ENCODE measurements at regions of chr7 and their contacts with region 1.

Region 1: GRCh38 chr7:108459931-108460551 is 3.8 kb upstream of the NRCAM start:
- DNase-seq: peak; percentile 49
- ATAC-seq: peak; percentile 39
- H3K4me3 ChIP-seq: no peak overlapping the region
- H3K4me3 Mint-ChIP-seq: no peak overlapping the region
- H3K27ac ChIP-seq: no peak overlapping the region
- H3K27ac Mint-ChIP-seq: no peak overlapping the region
- H3K4me1 ChIP-seq: peaks cover 12 to 15% of the 10 kb centered on the region in 2 donors
- H3K4me1 Mint-ChIP-seq: peaks cover 10% of the 10 kb centered on the region
- H3K27me3 ChIP-seq: peaks cover 0 to 53% (median 29%) of the 10 kb centered on the region in 4 experiments
- H3K27me3 Mint-ChIP-seq: peaks cover 55% of the 10 kb centered on the region
- CTCF ChIP-seq: peak; percentile 71

Region 2: DNA sequence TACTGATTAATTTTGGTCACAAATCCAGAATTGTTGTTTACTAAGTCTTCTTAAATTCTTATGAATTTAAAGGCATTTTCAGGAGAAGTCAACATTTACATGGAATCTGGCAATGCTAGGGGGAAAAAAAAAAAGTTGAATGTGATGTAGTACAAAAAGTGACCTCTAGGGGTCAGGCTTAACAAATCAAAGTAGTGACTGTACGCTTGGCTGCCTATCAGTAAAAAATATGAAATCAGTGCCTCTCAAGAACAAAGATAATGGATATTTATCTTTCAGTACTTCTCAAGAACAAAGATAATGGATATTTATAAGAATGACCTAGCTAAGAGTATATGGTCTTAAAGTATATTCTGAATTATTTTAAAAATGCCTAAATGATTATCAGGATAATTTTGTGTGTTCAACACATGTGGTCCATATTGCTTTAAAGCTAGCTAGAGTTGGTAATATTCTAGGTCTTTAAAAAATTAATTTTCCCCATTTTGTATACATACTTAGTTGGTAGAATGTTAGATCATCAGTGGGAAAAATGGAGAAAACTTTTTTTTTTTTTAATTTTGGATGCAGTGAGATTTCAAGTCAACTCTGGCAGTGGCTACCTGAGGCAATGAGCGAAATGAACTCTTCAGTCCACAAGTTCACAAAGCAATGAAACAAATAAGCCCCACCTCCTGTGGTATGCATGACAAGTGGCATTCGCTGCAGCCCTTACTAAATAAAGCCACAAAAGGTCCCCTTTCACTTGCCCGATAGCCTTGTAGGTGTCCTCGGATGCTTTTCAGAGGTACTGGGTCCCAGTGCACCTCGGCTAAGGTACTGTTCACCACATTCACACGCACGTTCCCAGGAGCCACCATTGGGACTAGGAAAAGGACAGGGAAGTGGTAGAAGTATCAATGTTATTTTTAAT is 278.7 kb before region 1 on chr7:
- CTCF ChIA-PET with region 1: interaction called, 20 read pairs
- POLR2A ChIA-PET with region 1: no interaction called
- intact Hi-C with region 1: loop called (anchors 1 kb)
- DNase-seq: peak; percentile 71
- ATAC-seq: peak; percentile 66
- H3K4me3 ChIP-seq: no peak overlapping the region
- H3K4me3 Mint-ChIP-seq: no peak overlapping the region
- H3K27ac ChIP-seq: no peak overlapping the region
- H3K27ac Mint-ChIP-seq: no peak overlapping the region
- H3K4me1 ChIP-seq: no peaks in the 10 kb centered on the region
- H3K4me1 Mint-ChIP-seq: no peaks in the 10 kb centered on the region
- H3K27me3 ChIP-seq: peaks cover 0 to 3% (median 0%) of the 10 kb centered on the region in 4 experiments
- H3K27me3 Mint-ChIP-seq: peaks cover 6% of the 10 kb centered on the region
- CTCF ChIP-seq: peak; percentile 90